Activated naive CD4-positive, alpha-beta T cell treated with anti-CD3 and anti-CD28 coated beads for 36 hours (primary cell): ENCODE measurements at regions of chr1 and their contacts with region 1.

Region 1: GRCh38 chr1:9428601-9429341 is 110.5 kb upstream of the SLC25A33 start:
- DNase-seq: peak; percentile 100
- H3K4me3 Mint-ChIP-seq: peak overlapping the region; percentile 98
- H3K27ac Mint-ChIP-seq: peak overlapping the region; percentile 95
- H3K4me1 Mint-ChIP-seq: peaks cover 46% of the 10 kb centered on the region
- H3K27me3 Mint-ChIP-seq: no peaks in the 10 kb centered on the region

Region 2: GRCh38 chr1:9194016-9194415 is 234.8 kb before region 1 on chr1:
- CTCF ChIA-PET with region 1: no interaction called
- intact Hi-C with region 1: no loop called
- DNase-seq: no peak
- H3K4me3 Mint-ChIP-seq: no peak overlapping the region
- H3K27ac Mint-ChIP-seq: no peak overlapping the region
- H3K4me1 Mint-ChIP-seq: peaks cover 5% of the 10 kb centered on the region
- H3K27me3 Mint-ChIP-seq: peaks cover 19% of the 10 kb centered on the region

Region 3: GRCh38 chr1:9315411-9316079 is 113.2 kb before region 1 on chr1:
- CTCF ChIA-PET with region 1: no interaction called
- intact Hi-C with region 1: loop called (anchors 1 kb)
- DNase-seq: peak; percentile 79
- H3K4me3 Mint-ChIP-seq: peak overlapping the region; percentile 30
- H3K27ac Mint-ChIP-seq: peak overlapping the region; percentile 83
- H3K4me1 Mint-ChIP-seq: peaks cover 39% of the 10 kb centered on the region
- H3K27me3 Mint-ChIP-seq: no peaks in the 10 kb centered on the region

Region 4: DNA sequence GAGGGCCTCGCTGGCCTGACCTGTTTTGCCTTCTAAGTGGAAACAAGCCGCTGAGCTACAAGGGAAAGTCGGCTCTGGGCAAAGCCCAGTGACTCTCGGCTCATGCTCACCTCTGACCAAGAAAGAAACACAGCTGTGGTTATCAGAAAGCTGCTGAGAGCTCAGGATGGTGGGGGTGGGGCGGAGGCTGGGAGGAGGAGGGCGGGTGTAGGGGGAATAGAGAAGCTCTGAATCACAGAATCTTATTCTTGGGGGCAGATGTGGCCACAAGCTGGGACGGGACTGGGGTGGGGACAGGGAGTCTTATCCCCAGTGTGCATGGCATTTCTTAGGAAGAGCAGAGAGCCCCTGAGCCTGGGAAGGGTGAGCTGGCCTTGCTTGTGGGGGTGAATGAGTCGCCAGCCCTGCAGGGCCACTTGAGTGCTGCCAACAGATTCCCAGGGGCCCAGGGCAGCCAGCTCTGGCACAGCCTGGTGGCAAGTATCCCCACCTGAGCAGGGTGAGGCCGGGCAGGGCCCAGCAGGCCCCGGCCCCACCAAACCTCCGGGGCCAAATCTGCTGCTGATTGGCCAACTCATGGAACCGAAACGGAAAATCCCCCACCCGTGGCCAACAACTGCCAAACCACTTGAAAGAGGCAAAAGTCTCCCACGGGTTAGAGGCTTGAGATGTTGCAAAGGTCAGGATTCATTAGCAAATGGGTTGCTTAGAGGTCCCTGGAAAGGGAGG is 15.5 kb before region 1 on chr1:
- CTCF ChIA-PET with region 1: interaction called, 15 read pairs
- intact Hi-C with region 1: loop called (anchors 1 kb)
- DNase-seq: peak; percentile 89
- H3K4me3 Mint-ChIP-seq: no peak overlapping the region
- H3K27ac Mint-ChIP-seq: no peak overlapping the region
- H3K4me1 Mint-ChIP-seq: peaks cover 46% of the 10 kb centered on the region
- H3K27me3 Mint-ChIP-seq: no peaks in the 10 kb centered on the region

Region 5: GRCh38 chr1:9539165-9539828 is 110.5 kb after region 1 on chr1 and contains the start of gene SLC25A33:
- CTCF ChIA-PET with region 1: no interaction called
- intact Hi-C with region 1: loop called (anchors 1 kb)
- DNase-seq: peak; percentile 99
- H3K4me3 Mint-ChIP-seq: peak within 1 kb of the TSS; percentile 92
- H3K27ac Mint-ChIP-seq: peak within 1 kb of the TSS; percentile 74
- H3K4me1 Mint-ChIP-seq: peaks cover 32% of the 10 kb centered on the region
- H3K27me3 Mint-ChIP-seq: no peaks in the 10 kb centered on the region
- total RNA-seq, gene SLC25A33: 4.7 to 5.2 TPM

Region 6: DNA sequence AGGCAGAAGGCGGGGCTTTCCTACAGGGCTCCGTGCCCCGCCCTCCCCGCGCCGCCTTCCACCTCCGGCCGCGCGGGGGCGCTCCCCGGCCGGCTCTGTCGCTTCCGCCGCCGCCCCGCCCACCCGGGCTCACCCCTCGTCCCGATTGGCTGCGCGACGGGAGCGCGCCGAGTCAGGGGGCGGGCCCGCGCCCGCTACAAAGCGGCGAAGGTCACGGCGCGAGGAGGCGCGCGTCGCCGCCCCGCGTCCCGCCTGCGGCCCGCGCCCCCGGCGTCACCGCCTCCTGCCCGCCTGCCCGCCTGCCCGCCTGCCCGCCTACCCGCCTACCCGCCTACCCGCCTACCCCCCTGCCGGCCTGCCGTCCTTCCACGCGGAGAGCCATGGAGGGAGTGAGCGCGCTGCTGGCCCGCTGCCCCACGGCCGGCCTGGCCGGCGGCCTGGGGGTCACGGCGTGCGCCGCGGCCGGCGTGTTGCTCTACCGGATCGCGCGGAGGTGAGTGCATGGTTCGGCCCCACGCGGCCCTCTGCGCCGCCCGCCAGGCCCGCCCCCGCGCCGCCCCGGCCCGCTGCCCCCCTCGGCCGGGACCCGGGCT is 159.9 kb after region 1 on chr1 and contains the start of gene TMEM201:
- CTCF ChIA-PET with region 1: interaction called, 7 read pairs
- intact Hi-C with region 1: loop called (anchors 2 kb)
- DNase-seq: peak; percentile 92
- H3K4me3 Mint-ChIP-seq: peak within 1 kb of the TSS; percentile 78
- H3K27ac Mint-ChIP-seq: no peak within 1 kb of the TSS
- H3K4me1 Mint-ChIP-seq: peaks cover 38% of the 10 kb centered on the region
- H3K27me3 Mint-ChIP-seq: no peaks in the 10 kb centered on the region
- total RNA-seq, gene TMEM201: 9.1 to 9.8 TPM